ENCODE measurements at regions of chr11 and their contacts with region 1.

Region 1: DNA sequence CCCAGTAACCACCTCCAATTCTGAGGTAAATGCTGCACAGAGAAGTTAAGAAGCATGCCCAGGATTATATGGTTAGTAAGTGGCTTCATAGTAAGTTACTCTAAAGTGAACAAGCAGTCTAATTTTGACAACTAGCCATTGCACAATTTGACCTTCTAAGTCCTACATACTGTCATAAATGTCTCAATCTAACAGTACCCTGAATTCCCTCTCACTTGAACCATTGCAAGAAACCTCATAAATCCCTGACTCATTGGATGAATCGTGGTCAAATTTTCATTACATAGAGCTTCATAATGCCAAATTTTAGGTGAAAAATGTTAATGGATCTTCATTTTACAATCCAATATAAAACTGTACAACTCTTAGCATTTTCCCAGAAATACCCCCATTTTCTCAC is 217.3 kb upstream of the GRIA4 start:
- DNase-seq: peak; percentile 10
- ATAC-seq: no peak
- H3K4me3 ChIP-seq: no peak overlapping the region
- H3K27ac ChIP-seq: no peak overlapping the region
- H3K4me1 ChIP-seq: no peaks in the 10 kb centered on the region
- H3K27me3 ChIP-seq: no peaks in the 10 kb centered on the region
- CTCF ChIP-seq: no peak

Region 2: GRCh38 chr11:105334025-105334710 is 58.4 kb before region 1 on chr11:
- CTCF ChIA-PET with region 1: no interaction called
- POLR2A ChIA-PET with region 1: no interaction called
- intact Hi-C with region 1: no loop called
- DNase-seq: no peak
- ATAC-seq: no peak
- H3K4me3 ChIP-seq: no peak overlapping the region
- H3K27ac ChIP-seq: no peak overlapping the region
- H3K4me1 ChIP-seq: no peaks in the 10 kb centered on the region
- H3K27me3 ChIP-seq: no peaks in the 10 kb centered on the region
- CTCF ChIP-seq: no peak

Region 3: DNA sequence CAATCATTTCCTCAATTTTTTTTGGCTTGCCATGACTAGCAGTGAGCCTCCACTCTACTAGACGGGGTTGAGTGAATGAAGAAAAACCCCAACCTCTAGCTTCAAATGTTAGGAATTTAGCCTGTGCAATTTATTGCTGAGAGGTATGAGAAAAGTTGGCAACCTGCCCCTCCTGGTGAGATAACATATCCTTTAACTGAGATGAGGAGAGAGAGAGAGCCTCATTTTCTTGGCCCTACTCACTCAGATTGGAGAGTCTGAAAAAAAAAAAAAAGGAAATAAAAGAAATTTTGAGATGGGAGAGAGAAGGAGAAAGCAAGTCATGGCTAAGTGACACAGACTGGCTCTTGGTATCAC is 34.8 kb before region 1 on chr11:
- CTCF ChIA-PET with region 1: interaction called, 11 read pairs
- POLR2A ChIA-PET with region 1: no interaction called
- intact Hi-C with region 1: no loop called
- DNase-seq: peak; percentile 18
- ATAC-seq: no peak
- H3K4me3 ChIP-seq: no peak overlapping the region
- H3K27ac ChIP-seq: no peak overlapping the region
- H3K4me1 ChIP-seq: 0 out of 2 replicates have a peak, but pooled peaks cover 3% of the 10 kb centered on the region
- H3K27me3 ChIP-seq: no peaks in the 10 kb centered on the region
- CTCF ChIP-seq: no peak

Measured in PC-3 (cell line).